PC-9 (cell line): ENCODE measurements at regions of chr4 and their contacts with region 1.

Region 1: GRCh38 chr4:121823505-121824170 is at the start of gene CCNA2:
- DNase-seq: peak; percentile 92 to 93
- H3K4me3 ChIP-seq: peak within 1 kb of the TSS; percentile 85
- H3K27ac ChIP-seq: peak within 1 kb of the TSS; percentile 25; the same call in 1 of the 2 replicates
- H3K4me1 ChIP-seq: peaks cover 27% of the 10 kb centered on the region
- H3K27me3 ChIP-seq: no peaks in the 10 kb centered on the region
- CTCF ChIP-seq: no peak
- total RNA-seq, gene CCNA2: 61.9 and 70.7 TPM in 2 replicates

Region 2: GRCh38 chr4:121800961-121801714 is 22.5 kb before region 1 on chr4 and contains the start of gene EXOSC9:
- CTCF ChIA-PET with region 1: no interaction called
- POLR2A ChIA-PET with region 1: no interaction called
- intact Hi-C with region 1: loop called (anchors 1 kb)
- DNase-seq: peak; percentile 85 to 92
- H3K4me3 ChIP-seq: peak within 1 kb of the TSS; percentile 87
- H3K27ac ChIP-seq: peak within 1 kb of the TSS; percentile 62
- H3K4me1 ChIP-seq: peaks cover 18% of the 10 kb centered on the region
- H3K27me3 ChIP-seq: no peaks in the 10 kb centered on the region
- CTCF ChIP-seq: no peak
- total RNA-seq, gene EXOSC9: 23.0 and 29.9 TPM in 2 replicates